Heart right ventricle (tissue), 16 donors: ENCODE measurements at regions of chr2 and their contacts with region 1.

Region 1: GRCh38 chr2:29841386-29842004 is 79.9 kb downstream of the ALK start:
- DNase-seq: peak in 1 of 2 donors; percentile 9
- ATAC-seq: peak in 2 of 8 donors; percentile 44 to 54
- H3K4me3 ChIP-seq: no peak overlapping the region
- H3K27ac ChIP-seq: no peak overlapping the region
- H3K4me1 ChIP-seq: no peaks in the 10 kb centered on the region
- H3K27me3 ChIP-seq: peaks cover 0 to 28% (median 14%) of the 10 kb centered on the region in 7 donors
- CTCF ChIP-seq: peak; percentile 60 to 93 (median 82)

Region 2: DNA sequence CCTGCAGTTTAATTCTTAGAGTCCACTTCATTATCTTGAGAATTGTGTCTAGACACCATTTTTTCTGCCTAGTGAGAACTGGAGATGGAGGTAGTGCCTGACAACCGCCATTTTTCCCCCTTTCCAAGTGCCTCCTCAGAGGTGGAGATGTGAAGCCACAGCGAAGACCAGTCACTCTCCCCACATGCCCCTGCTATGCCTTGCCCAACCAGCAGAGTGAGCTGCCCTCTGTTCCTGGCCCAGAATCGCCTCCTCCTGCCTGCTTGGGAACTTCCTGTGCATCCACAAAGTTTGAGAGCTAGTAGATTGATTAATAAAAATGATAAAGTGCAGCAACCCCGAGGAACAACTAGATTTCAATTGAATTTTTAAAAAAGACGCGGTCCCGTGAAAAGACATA is 603.0 kb before region 1 on chr2:
- intact Hi-C with region 1: loop called in 3 of 10 experiments (anchors 5 to 10 kb)
- DNase-seq: no peak
- ATAC-seq: no peak
- H3K4me3 ChIP-seq: no peak overlapping the region
- H3K27ac ChIP-seq: no peak overlapping the region
- H3K4me1 ChIP-seq: no peaks in the 10 kb centered on the region
- H3K27me3 ChIP-seq: peaks cover 0 to 71% (median 21%) of the 10 kb centered on the region in 7 donors
- CTCF ChIP-seq: peak in 7 of 9 donors; percentile 40 to 56 (median 46)

Region 3: DNA sequence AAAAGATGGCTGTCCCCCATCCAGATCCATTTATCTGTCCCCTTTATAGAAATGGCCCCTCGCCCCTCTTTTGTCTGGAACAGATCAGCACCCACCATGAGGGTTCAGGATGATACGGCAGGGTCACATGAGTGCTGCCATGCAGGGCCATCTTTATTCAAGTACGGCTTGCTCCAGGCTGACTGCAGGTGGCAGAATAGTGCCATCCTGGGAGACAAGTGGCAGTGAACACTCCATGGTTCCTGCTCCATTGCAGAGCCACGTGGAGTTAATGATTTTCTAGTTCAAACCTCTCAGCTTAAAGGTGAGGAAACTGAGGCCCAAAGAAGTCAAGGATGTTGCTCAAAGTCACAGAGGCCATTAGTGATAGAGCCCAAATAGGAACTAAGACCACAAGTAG is 545.6 kb before region 1 on chr2:
- intact Hi-C with region 1: loop called in 6 of 10 experiments (anchors 2 to 10 kb)
- DNase-seq: no peak
- ATAC-seq: no peak
- H3K4me3 ChIP-seq: no peak overlapping the region
- H3K27ac ChIP-seq: no peak overlapping the region
- H3K4me1 ChIP-seq: no peaks in the 10 kb centered on the region
- H3K27me3 ChIP-seq: peaks cover 0 to 38% (median 15%) of the 10 kb centered on the region in 7 donors
- CTCF ChIP-seq: peak in 7 of 9 donors; percentile 22 to 44 (median 27)

Region 4: DNA sequence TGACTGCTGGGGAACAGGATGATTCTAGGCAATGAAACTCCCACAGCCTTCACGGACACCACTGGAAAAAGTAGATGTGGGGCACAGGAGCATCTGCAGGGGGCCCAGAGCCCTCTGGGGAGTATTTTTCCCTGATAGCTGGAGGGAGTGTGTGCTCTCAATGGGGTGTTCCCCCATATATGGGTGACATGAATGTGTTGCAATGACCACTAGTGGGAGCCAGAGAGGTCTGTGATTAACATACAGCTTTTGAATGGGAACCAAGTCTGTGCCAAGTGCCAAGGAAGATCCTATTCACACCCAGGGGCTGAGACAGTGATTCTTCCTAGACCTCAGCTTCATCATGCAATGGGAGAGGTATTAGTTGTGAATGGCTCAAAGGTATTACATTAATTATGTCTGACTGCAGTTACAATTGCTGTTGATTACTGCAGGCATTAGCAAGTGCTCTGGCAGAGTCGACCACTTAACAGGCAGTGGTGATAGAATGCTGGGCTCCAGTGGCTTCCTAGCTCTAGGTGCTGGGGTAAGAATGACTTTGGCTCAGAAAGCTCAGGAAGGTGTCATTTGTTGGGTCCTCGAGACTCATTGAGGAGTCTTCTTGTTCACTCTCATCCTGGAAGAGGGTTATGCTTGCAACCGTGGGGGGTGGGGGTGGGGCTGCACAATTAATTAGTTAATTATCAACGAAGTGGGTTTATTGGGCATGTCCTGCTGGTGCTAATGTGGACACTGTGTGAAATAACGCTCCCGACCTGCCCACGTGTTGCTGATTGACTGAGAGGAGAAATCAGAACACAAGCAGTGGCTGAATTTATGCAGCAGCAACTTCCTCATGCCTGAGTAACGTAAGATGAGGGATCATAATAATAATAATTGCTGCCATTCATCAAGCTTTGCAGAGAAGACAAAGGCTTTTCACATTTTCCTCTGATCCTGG is 532.1 kb before region 1 on chr2:
- intact Hi-C with region 1: loop called in 5 of 10 experiments (anchors 5 to 10 kb)
- DNase-seq: peak in 1 of 2 donors; percentile 59
- ATAC-seq: peak in 7 of 8 donors; percentile 59 to 78 (median 66)
- H3K4me3 ChIP-seq: no peak overlapping the region
- H3K27ac ChIP-seq: no peak overlapping the region
- H3K4me1 ChIP-seq: peaks cover 0 to 2% (median 0%) of the 10 kb centered on the region in 9 donors
- H3K27me3 ChIP-seq: peaks cover 0 to 38% (median 16%) of the 10 kb centered on the region in 7 donors
- CTCF ChIP-seq: peak; percentile 49 to 80 (median 70)

Region 5: DNA sequence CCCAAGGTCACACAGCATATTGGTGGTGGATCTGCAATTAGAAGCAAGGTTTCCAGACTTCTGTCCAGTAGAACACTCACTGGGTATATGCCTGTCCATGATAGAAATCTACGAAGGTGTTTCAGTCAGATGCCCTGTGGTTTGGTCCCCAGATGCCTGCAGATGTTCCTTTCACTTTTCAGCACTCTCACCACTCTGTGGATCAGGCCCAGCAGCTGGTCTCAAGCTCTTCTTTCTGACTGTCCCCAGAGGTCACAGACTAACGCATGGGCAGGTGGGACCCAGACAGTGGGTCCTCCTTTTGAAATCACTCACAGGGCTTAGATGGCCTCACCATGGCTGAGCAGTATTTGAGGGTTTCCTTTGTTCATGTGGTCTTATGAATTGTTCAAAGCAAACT is 296.6 kb before region 1 on chr2:
- intact Hi-C with region 1: loop called in 1 of 10 experiments (anchors 5 kb)
- DNase-seq: no peak
- ATAC-seq: no peak
- H3K4me3 ChIP-seq: no peak overlapping the region
- H3K27ac ChIP-seq: no peak overlapping the region
- H3K4me1 ChIP-seq: no peaks in the 10 kb centered on the region
- H3K27me3 ChIP-seq: peaks cover 0 to 11% (median 0%) of the 10 kb centered on the region in 7 donors
- CTCF ChIP-seq: no peak